BJ (cell line): ENCODE measurements at regions of chr11 and their contacts with region 1.

Region 1: GRCh38 chr11:74388678-74389327 is 9.4 kb downstream of the PGM2L1 start:
- DNase-seq: no peak
- H3K4me3 ChIP-seq: no peak overlapping the region
- H3K27me3 ChIP-seq: no peaks in the 10 kb centered on the region
- CTCF ChIP-seq: peak; percentile 81

Region 2: DNA sequence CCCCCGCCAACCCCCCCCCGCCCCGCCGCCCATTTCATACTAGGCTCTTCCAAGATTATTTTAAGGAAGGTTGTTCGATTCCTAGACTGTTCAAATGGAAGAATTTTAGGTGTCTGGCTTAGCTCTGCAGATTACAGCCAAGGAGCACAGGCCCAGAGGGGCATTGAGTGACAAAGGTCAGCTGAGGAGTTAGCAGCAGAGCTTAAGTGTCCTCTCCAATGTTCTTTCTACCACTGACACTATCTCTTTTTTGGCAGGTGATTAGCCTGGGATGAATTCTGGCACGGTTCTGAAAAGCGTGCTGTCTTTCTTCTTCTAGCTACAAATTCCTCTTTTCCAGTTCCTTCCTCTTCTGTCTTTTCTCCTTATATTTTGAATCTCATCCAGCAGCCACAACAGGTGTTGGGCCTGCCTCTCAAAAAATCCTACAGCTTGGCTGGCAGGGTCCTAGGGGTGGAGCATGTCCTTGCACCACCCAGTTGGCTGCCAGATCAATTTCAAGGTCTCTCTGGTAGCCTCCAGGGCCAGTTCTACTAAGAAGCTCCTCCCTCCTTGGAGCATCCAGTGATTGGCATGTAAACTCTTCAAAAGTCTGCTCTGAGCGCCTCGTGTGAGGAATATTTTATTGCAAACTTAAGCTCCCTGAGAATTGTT is 55.5 kb after region 1 on chr11:
- CTCF ChIA-PET with region 1: interaction called, 17 read pairs
- POLR2A ChIA-PET with region 1: no interaction called
- DNase-seq: no peak
- H3K4me3 ChIP-seq: no peak overlapping the region
- H3K27me3 ChIP-seq: no peaks in the 10 kb centered on the region; the same call in 1 of the 2 replicates
- CTCF ChIP-seq: no peak